GM10248 (cell line): ENCODE measurements at regions of chr5 and their contacts with region 1.

Region 1: DNA sequence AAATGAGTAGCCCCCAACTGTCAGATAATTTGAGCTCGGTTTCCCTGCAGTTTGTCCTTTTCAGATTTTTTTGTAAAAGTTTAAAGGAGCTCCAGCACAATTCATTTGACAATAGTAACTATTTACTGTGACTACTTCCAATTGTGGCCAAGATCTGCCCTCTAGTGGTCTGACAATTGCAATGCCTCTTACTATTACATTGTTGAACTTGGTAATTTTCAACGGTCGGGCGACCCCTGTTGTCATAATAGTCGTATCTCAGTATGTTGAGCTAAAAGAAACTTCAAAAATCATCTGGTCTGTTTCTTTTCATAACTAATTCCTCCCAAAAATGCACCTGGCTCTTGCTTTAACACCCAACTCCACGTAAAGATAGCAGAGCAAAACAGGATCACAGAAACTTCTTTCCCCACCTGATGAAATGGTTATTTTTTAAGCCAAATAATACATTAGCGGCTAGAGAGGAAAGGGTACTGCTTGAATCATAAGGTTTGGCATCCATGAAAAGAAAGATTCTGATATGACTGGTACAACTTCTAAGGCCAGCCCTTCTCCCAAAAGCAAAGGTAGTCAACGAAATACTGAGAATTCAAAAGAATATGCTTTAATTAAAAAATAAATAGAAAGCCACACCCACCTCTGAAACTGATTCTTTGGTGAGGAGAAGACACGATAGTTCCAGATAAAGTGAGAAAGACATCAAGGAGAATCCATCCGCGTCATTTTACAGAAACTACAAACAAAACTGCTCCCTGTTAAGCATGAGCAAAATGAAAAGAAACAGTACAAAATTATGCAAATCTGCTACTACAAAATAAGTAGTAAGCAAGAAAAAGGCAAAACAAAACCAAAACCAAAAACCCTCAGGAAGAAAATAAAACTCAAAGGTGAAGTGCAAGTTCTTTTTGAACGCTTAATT is 76.9 kb upstream of the HTR4 start:
- DNase-seq: peak; percentile 50
- CTCF ChIP-seq: peak; percentile 85

Region 2: DNA sequence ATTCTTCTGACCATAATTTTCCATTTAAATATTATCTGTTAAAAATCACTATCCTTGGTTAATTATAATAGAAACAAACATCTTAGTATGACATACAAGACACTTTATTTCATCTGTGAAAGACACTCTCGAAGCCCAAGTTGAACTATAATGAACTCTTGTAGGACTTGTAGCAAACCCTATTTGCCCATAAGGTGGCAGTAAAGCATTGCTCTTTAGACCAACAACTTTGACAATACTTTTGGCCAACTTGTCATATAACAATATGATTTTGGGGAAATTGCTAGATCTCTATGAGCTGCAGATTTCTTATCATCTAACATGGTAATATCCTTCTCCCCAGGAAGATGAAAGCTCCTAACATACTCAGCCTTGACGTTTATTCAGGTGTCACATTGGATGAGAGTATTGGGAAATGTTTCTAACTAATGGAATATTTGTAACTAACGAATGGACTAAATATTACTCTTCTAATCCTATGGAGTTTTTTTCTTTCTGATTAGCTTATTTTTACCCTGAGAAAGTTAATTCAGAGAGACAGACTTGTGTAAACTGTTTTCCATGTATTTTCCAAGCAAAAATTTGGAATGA is 551.9 kb before region 1 on chr5:
- CTCF ChIA-PET with region 1: interaction called, 25 read pairs
- POLR2A ChIA-PET with region 1: no interaction called
- DNase-seq: peak; percentile 10
- CTCF ChIP-seq: peak; percentile 57

Region 3: GRCh38 chr5:148620696-148621095 is 110.5 kb before region 1 on chr5:
- CTCF ChIA-PET with region 1: no interaction called
- POLR2A ChIA-PET with region 1: no interaction called
- DNase-seq: no peak
- CTCF ChIP-seq: no peak

Region 4: DNA sequence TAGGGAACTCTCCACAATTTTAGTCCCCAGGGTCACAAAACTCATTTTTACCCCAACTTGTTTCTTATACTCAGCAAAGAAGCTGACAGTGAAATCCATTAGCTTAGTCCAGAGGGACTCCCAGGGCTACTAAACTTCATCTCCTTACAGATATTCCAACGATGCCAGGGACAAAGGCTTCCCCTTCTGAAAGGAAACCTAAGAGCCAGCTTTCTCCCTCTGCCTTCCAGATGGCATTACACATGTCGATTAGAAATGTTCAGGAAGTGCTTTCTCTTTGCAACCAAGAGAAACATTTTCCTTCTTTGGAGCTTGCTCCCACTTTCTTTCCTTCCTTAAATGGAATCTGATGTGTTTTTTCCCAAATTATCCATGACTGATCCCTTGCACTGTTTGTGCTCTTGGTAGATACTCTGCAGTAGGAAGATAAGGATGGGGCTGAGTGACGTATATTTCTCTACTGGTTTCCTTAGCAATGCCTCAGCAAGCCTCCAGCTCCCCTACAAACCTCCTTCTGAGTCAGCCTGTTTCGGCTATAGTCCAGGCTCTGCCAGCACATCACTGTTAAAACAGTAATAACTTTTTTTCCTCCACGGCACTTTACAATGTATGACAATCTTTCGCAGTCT is 33.9 kb before region 1 on chr5:
- CTCF ChIA-PET with region 1: interaction called, 45 read pairs
- POLR2A ChIA-PET with region 1: no interaction called
- DNase-seq: no peak
- CTCF ChIP-seq: no peak

Region 5: GRCh38 chr5:148719605-148720004 is 11.6 kb before region 1 on chr5:
- CTCF ChIA-PET with region 1: interaction called, 20 read pairs
- POLR2A ChIA-PET with region 1: no interaction called
- DNase-seq: no peak
- CTCF ChIP-seq: no peak

Region 6: DNA sequence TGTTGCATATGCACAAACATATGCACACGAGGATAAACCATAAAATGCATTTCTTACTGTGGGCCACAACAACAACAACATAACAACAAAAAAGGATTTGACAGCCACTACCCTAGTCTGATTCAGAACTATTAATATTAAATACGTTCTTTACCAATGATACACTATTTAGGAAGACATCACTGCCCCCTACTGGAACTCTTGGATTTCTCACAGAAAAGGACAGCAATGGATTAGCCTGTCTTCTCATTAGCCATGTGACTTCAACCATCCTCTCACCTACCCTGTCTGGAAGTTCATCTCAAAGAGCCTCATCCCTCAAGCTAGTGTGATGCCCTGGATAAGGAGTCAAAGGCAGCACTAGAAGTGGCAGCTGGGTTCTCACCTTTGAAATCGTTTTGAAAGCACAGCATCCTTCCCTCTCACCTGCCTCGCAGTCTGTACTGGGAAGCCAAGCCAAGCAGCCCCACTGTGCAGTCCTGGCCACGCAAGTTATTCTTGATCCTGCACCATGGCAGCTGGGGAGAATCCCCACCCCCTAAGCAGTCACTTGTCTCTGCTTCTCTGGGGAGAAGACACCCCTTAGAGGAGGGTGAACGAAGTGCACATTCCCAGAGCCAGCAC is 267.1 kb after region 1 on chr5:
- CTCF ChIA-PET with region 1: interaction called, 276 read pairs
- POLR2A ChIA-PET with region 1: no interaction called
- DNase-seq: peak; percentile 34
- CTCF ChIP-seq: peak; percentile 59

Region 7: GRCh38 chr5:149114403-149115312 is 383.5 kb after region 1 on chr5:
- CTCF ChIA-PET with region 1: interaction called, 54 read pairs
- POLR2A ChIA-PET with region 1: no interaction called
- DNase-seq: peak; percentile 29
- CTCF ChIP-seq: peak; percentile 78